ENCODE measurements at regions of chr10 and their contacts with region 1.

Region 1: GRCh38 chr10:102729029-102730026 is 14.4 kb upstream of the WBP1L start:
- DNase-seq: peak in 1 of 2 experiments; percentile 71
- H3K4me3 ChIP-seq: no peak overlapping the region
- H3K27ac ChIP-seq: no peak overlapping the region
- H3K4me1 ChIP-seq: no peaks in the 10 kb centered on the region
- H3K27me3 ChIP-seq: no peaks in the 10 kb centered on the region
- CTCF ChIP-seq: peak; percentile 74

Region 2: GRCh38 chr10:102300278-102300843 is 429.0 kb before region 1 on chr10:
- CTCF ChIA-PET with region 1: no interaction called
- POLR2A ChIA-PET with region 1: no interaction called
- intact Hi-C with region 1: no loop called
- DNase-seq: no peak
- H3K4me3 ChIP-seq: no peak overlapping the region
- H3K27ac ChIP-seq: no peak overlapping the region
- H3K4me1 ChIP-seq: no peaks in the 10 kb centered on the region
- H3K27me3 ChIP-seq: no peaks in the 10 kb centered on the region
- CTCF ChIP-seq: no peak

Region 3: DNA sequence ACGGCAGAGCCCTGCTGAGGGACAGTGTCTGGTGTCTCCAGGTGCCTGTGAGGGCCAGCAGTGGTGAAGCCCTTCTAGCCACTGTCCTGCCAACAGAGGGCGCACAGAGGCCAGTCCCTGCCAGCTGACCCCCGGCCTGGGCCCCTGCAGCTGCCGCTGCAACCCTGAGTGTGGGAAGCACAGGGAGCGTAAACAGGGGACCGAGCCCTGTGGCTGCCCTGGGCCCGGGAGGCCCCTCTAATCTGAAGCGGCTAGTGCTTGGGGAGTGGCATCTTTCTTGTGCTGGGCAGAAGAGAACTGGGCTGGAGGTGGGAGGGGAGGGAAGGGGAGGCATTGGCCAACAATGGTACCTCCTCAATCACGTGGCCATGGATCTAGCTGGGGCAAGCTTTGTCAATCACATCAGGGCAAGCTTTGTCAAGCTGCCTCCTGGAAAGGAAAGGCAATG is 50.5 kb before region 1 on chr10:
- CTCF ChIA-PET with region 1: no interaction called
- POLR2A ChIA-PET with region 1: no interaction called
- intact Hi-C with region 1: loop called (anchors 5 kb)
- DNase-seq: peak in 1 of 2 experiments; percentile 55
- H3K4me3 ChIP-seq: no peak overlapping the region
- H3K27ac ChIP-seq: no peak overlapping the region
- H3K4me1 ChIP-seq: no peaks in the 10 kb centered on the region
- H3K27me3 ChIP-seq: no peaks in the 10 kb centered on the region
- CTCF ChIP-seq: peak; percentile 73

Region 4: DNA sequence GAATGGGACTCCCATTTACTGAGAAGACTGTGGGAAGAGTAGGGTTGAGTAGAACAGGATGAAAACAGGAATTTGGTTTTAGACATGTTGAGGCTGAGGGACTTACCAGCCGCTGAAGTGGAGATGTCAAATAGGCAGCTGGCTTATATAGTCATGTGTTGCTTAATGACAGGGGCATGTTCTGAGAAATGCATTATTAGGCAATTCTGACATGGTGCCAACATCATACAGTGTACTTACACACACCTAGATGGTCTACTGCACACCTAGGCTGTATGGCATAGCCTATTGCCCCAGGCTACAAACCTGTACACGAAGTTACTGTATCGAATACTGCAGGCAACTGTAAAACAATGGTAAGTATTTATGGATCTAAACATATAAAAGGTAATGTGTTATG is 32.6 kb before region 1 on chr10:
- CTCF ChIA-PET with region 1: interaction called, 3 read pairs
- POLR2A ChIA-PET with region 1: interaction called, 10 read pairs
- intact Hi-C with region 1: no loop called
- DNase-seq: peak in 1 of 2 experiments; percentile 52
- H3K4me3 ChIP-seq: no peak overlapping the region
- H3K27ac ChIP-seq: no peak overlapping the region
- H3K4me1 ChIP-seq: peaks cover 6% of the 10 kb centered on the region
- H3K27me3 ChIP-seq: no peaks in the 10 kb centered on the region
- CTCF ChIP-seq: no peak

Region 5: DNA sequence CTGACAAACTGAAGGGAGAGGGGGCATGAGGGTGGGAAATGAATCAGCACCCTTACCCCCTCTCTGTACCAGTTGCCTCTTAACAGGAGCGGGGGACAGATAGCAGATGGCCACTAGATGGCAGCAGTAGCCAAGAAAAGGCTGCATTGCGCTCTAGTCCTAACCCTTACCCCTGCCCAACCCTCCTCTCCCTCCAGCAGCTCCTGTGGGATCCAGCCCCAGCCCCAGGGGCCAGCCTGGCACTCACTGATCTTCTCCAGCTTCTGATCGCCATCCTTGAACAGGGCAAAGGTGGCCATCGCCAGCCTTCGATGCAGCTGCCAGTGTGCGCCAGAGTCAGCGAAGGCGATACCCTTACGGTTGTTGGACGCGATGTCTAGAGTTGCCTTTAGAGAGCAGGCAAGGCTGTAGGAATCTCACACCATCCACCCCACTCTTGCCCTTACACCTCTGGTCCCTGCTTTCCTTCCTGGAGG is 105.7 kb after region 1 on chr10:
- CTCF ChIA-PET with region 1: no interaction called
- POLR2A ChIA-PET with region 1: no interaction called
- intact Hi-C with region 1: loop called (anchors 10 kb)
- DNase-seq: peak; percentile 38 to 58
- H3K4me3 ChIP-seq: no peak overlapping the region
- H3K27ac ChIP-seq: no peak overlapping the region
- H3K4me1 ChIP-seq: no peaks in the 10 kb centered on the region
- H3K27me3 ChIP-seq: no peaks in the 10 kb centered on the region
- CTCF ChIP-seq: peak; percentile 80

Region 6: DNA sequence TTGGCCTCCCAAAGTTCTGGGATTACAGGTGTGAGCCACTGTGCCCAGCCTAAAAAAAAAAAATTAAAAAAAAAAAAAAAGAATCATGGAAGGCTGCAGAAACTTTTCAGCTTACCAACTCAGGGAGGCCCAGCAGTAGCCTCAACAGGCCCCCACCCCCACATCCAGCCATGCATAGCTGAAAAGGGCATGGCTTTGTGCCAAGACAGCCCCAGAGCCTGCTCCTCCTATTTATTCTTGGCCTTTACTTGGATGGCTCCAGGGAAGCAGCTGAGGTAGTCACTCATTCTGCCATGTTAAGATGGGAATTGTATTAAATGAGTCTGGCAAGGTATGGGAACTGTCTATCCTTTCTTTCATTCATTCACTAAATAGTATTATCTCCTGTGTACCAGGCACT is 175.0 kb after region 1 on chr10:
- CTCF ChIA-PET with region 1: no interaction called
- POLR2A ChIA-PET with region 1: no interaction called
- intact Hi-C with region 1: loop called (anchors 1 kb)
- DNase-seq: no peak
- H3K4me3 ChIP-seq: no peak overlapping the region
- H3K27ac ChIP-seq: no peak overlapping the region
- H3K4me1 ChIP-seq: no peaks in the 10 kb centered on the region
- H3K27me3 ChIP-seq: no peaks in the 10 kb centered on the region
- CTCF ChIP-seq: no peak

Region 7: DNA sequence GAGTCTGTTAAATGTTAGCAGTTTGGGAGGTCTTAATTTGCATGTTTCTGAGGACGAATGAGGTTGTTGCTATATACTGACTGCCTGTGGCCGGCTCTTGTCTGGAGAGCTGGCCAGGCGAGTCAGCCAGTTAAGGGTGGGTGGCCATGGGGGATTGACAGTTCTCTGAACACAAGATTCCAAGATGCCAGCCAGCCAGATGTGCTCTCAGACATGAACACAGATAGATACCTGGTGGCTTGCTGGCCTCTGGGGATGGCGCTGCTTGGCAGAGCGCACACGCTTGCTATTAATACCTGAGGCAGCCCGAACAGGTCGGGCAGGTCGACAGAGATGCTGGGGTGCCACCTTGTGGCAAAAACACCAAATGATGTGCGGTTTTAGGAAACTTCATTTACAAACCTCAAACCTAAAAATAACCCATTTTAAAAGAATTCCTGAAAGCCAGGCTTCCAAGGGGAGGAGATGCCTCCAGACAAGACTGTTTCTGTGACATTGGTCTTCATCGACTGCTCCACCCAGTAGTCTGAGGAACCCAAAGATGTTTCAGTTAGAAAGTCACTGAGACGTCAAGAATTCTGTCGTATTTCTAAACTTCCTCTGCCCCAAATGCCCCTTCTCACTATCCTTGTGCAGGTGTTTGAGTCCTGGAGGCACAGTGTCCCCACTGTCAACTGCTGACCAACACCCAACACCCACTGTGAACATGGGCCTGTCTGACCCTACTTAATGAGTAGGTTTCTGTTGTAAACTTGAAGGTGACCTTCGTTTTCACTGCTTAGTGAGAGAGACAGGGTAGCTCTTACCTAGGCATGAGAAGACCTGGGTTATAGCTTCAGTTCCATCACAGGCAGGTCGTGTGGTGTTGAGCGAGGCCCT is 340.4 kb after region 1 on chr10:
- CTCF ChIA-PET with region 1: no interaction called
- POLR2A ChIA-PET with region 1: no interaction called
- intact Hi-C with region 1: loop called (anchors 1 kb)
- DNase-seq: peak; percentile 40 to 45
- H3K4me3 ChIP-seq: no peak overlapping the region
- H3K27ac ChIP-seq: no peak overlapping the region
- H3K4me1 ChIP-seq: no peaks in the 10 kb centered on the region; the same call in 1 of the 2 replicates
- H3K27me3 ChIP-seq: no peaks in the 10 kb centered on the region
- CTCF ChIP-seq: peak; percentile 71